ENCODE measurements at regions of chr2 and their contacts with region 1.

Region 1: GRCh38 chr2:28094739-28095138 is 204.2 kb downstream of the BABAM2 start:
- DNase-seq: no peak
- H3K4me3 ChIP-seq: no peak overlapping the region
- H3K27ac ChIP-seq: no peak overlapping the region
- H3K4me1 ChIP-seq: no peaks in the 10 kb centered on the region
- H3K27me3 ChIP-seq: no peaks in the 10 kb centered on the region
- CTCF ChIP-seq: no peak
- POLR2A ChIP-seq: no peak

Region 2: GRCh38 chr2:28148566-28148965 is 53.8 kb after region 1 on chr2:
- intact Hi-C with region 1: loop called (anchors 5 kb)
- DNase-seq: peak; percentile 22
- H3K4me3 ChIP-seq: no peak overlapping the region
- H3K27ac ChIP-seq: no peak overlapping the region
- H3K4me1 ChIP-seq: peaks cover 6% of the 10 kb centered on the region
- H3K27me3 ChIP-seq: no peaks in the 10 kb centered on the region
- CTCF ChIP-seq: no peak
- POLR2A ChIP-seq: no peak

Region 3: GRCh38 chr2:28175028-28175427 is 80.3 kb after region 1 on chr2:
- intact Hi-C with region 1: no loop called
- DNase-seq: no peak
- H3K4me3 ChIP-seq: no peak overlapping the region
- H3K27ac ChIP-seq: no peak overlapping the region
- H3K4me1 ChIP-seq: no peaks in the 10 kb centered on the region
- H3K27me3 ChIP-seq: no peaks in the 10 kb centered on the region
- CTCF ChIP-seq: no peak
- POLR2A ChIP-seq: no peak